ENCODE measurements at regions of chr4 and their contacts with region 1.

Region 1: GRCh38 chr4:4248029-4248884 is at the start of gene TMEM128:
- DNase-seq: peak; percentile 95
- H3K4me3 Mint-ChIP-seq: peak within 1 kb of the TSS; percentile 97
- H3K27ac Mint-ChIP-seq: peak within 1 kb of the TSS; percentile 98
- H3K4me1 Mint-ChIP-seq: peaks cover 27% of the 10 kb centered on the region
- H3K27me3 Mint-ChIP-seq: no peaks in the 10 kb centered on the region
- total RNA-seq, gene TMEM128: 22.0 to 25.3 TPM

Region 2: GRCh38 chr4:4225915-4226605 is 22.2 kb before region 1 on chr4:
- CTCF ChIA-PET with region 1: no interaction called
- POLR2A ChIA-PET with region 1: no interaction called
- intact Hi-C with region 1: no loop called
- DNase-seq: no peak
- H3K4me3 Mint-ChIP-seq: no peak overlapping the region
- H3K27ac Mint-ChIP-seq: no peak overlapping the region
- H3K4me1 Mint-ChIP-seq: peaks cover 8% of the 10 kb centered on the region
- H3K27me3 Mint-ChIP-seq: peaks cover 59% of the 10 kb centered on the region

Region 3: DNA sequence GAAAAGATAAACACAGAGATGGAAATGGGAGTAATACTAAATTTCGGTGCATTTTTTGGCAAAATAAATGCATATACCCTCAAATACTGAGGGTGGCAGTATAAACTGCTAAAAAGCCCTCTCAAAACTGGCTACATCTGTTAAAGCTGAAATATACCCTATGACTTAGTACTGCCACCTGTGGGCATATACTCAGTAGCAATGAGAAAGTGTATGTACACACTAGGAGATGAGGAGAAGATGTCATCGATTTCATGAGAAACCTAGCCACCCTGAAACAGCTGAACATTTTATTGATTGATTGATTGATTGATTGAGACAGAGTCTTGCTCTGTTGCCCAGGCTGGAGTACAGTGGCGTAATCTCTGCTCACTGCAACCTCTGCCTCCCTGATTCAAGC is 12.0 kb after region 1 on chr4:
- CTCF ChIA-PET with region 1: interaction called, 19 read pairs
- POLR2A ChIA-PET with region 1: interaction called, 8 read pairs
- intact Hi-C with region 1: no loop called
- DNase-seq: no peak
- H3K4me3 Mint-ChIP-seq: no peak overlapping the region
- H3K27ac Mint-ChIP-seq: no peak overlapping the region
- H3K4me1 Mint-ChIP-seq: peaks cover 3% of the 10 kb centered on the region
- H3K27me3 Mint-ChIP-seq: no peaks in the 10 kb centered on the region

Region 4: GRCh38 chr4:4289941-4290850 is 41.9 kb after region 1 on chr4 and contains the starts of genes LYAR and ZBTB49:
- CTCF ChIA-PET with region 1: interaction called, 4 read pairs
- POLR2A ChIA-PET with region 1: interaction called, 6 read pairs
- intact Hi-C with region 1: loop called (anchors 1 kb)
- DNase-seq: peak; percentile 98
- H3K4me3 Mint-ChIP-seq: peak within 1 kb of the TSS; percentile 95
- H3K27ac Mint-ChIP-seq: peak within 1 kb of the TSS; percentile 60
- H3K4me1 Mint-ChIP-seq: peaks cover 53% of the 10 kb centered on the region
- H3K27me3 Mint-ChIP-seq: no peaks in the 10 kb centered on the region
- total RNA-seq, gene LYAR: 49.7 to 54.0 TPM
- total RNA-seq, gene ZBTB49: 4.3 to 4.6 TPM

Region 5: GRCh38 chr4:4334798-4335520 is 86.7 kb after region 1 on chr4:
- CTCF ChIA-PET with region 1: interaction called, 26 read pairs
- POLR2A ChIA-PET with region 1: no interaction called
- intact Hi-C with region 1: loop called (anchors 1 kb)
- DNase-seq: peak; percentile 84
- H3K4me3 Mint-ChIP-seq: no peak overlapping the region
- H3K27ac Mint-ChIP-seq: no peak overlapping the region
- H3K4me1 Mint-ChIP-seq: peaks cover 4% of the 10 kb centered on the region
- H3K27me3 Mint-ChIP-seq: no peaks in the 10 kb centered on the region

Region 6: GRCh38 chr4:4386736-4387392 is 138.6 kb after region 1 on chr4 and contains the start of gene NSG1:
- CTCF ChIA-PET with region 1: no interaction called
- POLR2A ChIA-PET with region 1: no interaction called
- intact Hi-C with region 1: loop called (anchors 2 kb)
- DNase-seq: peak; percentile 55
- H3K4me3 Mint-ChIP-seq: peak within 1 kb of the TSS; percentile 78
- H3K27ac Mint-ChIP-seq: no peak within 1 kb of the TSS
- H3K4me1 Mint-ChIP-seq: peaks cover 13% of the 10 kb centered on the region
- H3K27me3 Mint-ChIP-seq: peaks cover 17% of the 10 kb centered on the region
- total RNA-seq, gene NSG1: 9.1 to 11.4 TPM

Region 7: GRCh38 chr4:4430492-4431197 is 182.4 kb after region 1 on chr4:
- CTCF ChIA-PET with region 1: interaction called, 8 read pairs
- POLR2A ChIA-PET with region 1: no interaction called
- intact Hi-C with region 1: loop called (anchors 2 kb)
- DNase-seq: peak; percentile 73
- H3K4me3 Mint-ChIP-seq: no peak overlapping the region
- H3K27ac Mint-ChIP-seq: no peak overlapping the region
- H3K4me1 Mint-ChIP-seq: peaks cover 13% of the 10 kb centered on the region
- H3K27me3 Mint-ChIP-seq: no peaks in the 10 kb centered on the region

Region 8: DNA sequence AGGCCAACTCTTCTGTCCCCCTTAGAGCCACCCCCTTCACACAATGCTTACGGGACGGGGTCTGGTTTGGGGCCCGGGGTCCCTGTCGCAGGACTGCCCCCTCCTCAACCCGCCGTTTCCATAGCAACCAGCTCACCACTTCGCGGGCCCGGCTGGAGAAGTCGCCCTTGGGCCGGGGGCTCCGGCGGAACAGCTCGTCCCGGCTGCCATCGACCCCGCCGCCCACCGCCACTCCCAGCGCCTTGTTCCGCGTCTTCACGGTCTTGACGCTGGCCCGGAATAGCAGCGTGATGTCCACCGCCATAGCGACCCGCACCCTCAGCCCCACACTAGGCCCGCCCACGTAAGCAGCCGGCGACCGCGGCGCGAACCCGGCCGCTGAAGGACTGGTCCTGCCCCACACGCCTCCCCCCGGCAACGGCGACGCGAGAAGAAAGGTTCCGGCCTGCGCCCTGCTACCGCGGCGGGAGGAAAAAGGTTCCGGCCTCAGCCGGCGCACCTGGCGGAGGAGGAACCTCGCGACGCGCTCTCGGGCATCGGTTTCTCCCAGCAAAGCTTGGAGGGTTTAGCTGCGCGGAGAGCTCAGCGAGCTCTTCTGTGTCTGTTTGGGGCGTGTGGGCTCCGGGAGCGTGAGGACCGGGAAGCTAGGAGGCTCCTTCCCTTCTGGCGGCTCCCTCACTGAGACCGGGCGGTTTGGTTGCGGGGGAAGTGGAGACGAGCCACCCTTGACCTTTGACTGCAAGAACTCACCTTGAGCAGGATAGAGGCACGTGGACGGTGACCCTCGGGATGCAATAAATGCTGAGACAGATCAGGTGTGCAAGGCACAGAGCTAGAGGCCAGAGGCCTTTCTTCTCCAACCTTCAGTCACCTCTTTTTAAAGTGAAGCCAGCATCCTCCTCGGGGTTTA is 293.7 kb after region 1 on chr4 and contains the start of gene STX18:
- CTCF ChIA-PET with region 1: no interaction called
- POLR2A ChIA-PET with region 1: interaction called, 6 read pairs
- intact Hi-C with region 1: loop called (anchors 5 kb)
- DNase-seq: peak; percentile 92
- H3K4me3 Mint-ChIP-seq: peak within 1 kb of the TSS; percentile 90
- H3K27ac Mint-ChIP-seq: peak within 1 kb of the TSS; percentile 86
- H3K4me1 Mint-ChIP-seq: peaks cover 46% of the 10 kb centered on the region
- H3K27me3 Mint-ChIP-seq: no peaks in the 10 kb centered on the region
- total RNA-seq, gene STX18: 20.2 to 23.2 TPM

Region 9: DNA sequence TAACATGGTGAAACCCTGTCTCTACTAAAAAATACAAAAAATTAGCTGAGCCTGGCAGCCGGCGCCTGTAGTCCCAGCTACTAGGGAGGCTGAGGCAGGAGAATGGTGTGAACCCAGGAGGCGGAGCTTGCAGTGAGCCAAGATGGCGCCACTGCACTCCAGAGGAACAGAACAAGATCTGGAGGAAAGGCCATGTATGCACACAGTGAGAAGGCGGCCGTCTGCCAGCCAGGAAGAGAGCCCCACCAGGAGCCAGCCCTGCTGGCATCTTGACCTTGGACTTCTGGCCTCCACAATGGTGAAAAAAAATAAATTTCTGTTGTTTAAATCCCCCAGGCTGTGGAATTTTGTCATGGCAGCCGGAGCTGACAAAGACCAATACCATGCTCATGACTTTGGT is 583.0 kb after region 1 on chr4:
- CTCF ChIA-PET with region 1: no interaction called
- POLR2A ChIA-PET with region 1: no interaction called
- intact Hi-C with region 1: no loop called
- DNase-seq: no peak
- H3K4me3 Mint-ChIP-seq: no peak overlapping the region
- H3K27ac Mint-ChIP-seq: no peak overlapping the region
- H3K4me1 Mint-ChIP-seq: no peaks in the 10 kb centered on the region
- H3K27me3 Mint-ChIP-seq: peaks cover 9% of the 10 kb centered on the region

Measured in activated CD4-positive, alpha-beta memory T cell treated with anti-CD3 and anti-CD28 coated beads for 36 hours (primary cell).